ENCODE measurements at regions of chr5 and their contacts with region 1.

Region 1: DNA sequence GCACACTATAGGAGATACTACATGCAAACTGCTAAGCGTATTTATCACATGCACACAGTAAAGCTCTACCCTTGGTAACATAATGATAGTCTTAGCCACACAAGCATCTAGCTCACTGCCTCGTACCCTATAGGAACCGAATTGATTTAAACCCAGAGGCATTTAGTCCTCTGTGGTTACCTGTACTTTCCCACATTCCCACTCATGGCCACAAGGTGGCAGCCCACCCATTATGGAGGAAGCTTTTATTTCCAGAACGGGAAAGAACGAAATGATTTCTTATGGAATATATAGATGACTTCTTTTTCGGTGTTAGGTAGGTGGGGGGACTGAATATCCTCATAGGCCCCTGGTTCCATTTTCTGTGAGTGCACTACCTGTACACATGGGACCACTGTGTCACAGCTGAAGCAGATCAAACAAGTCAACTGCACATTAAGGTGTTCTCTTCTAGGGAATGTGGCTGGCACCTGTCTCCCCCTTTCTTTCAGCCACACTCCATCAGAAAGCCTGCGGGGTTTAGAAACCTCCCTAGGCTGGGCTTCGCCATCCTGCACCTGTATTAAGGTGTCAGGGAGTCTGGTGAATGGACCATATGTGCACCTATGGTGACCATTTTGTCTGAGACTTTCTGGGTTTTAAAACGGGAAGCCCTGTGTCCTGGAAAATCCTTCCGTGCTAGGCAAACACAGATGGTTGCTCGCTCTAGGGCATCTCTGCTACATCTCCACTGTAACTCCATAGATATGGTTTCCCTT is 313.2 kb downstream of the SLIT3 start:
- DNase-seq: peak; percentile 89
- H3K4me3 ChIP-seq: no peak overlapping the region
- H3K27ac ChIP-seq: no peak overlapping the region
- H3K4me1 ChIP-seq: no peaks in the 10 kb centered on the region
- H3K27me3 ChIP-seq: no peaks in the 10 kb centered on the region
- CTCF ChIP-seq: peak; percentile 87 to 92 (median 92)
- POLR2A ChIP-seq: no peak

Region 2: DNA sequence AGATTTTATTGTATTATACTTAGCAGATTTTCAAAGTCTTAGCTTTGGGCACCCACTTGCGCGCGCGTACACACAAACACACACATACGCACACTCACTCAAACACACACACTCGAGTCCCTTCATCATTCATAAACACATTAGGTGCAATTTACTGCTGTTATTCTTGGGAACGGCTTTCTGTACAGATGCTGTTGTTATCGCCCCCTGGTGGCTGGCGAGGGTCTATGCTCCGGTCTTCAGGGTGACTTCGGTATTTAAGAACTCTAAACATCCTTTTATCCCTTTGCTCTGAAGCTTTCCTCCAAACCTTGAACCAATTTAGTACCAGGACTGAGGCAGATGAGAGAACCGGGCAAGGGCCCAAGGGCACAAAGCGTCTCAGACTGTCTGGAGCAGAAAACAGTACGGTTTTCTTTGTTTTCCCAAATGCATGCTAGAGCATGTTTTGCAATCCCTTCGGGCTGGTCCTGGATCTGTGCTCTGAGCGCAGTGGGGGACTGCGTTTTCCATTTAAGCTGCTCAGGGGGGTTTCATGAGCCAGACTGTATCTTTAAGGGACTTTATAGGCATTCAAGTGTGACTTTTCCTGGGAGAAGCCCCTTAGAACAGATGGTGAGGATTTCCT is 314.9 kb after region 1 on chr5:
- intact Hi-C with region 1: loop called (anchors 10 kb)
- DNase-seq: peak; percentile 85
- H3K4me3 ChIP-seq: no peak overlapping the region
- H3K27ac ChIP-seq: no peak overlapping the region
- H3K4me1 ChIP-seq: no peaks in the 10 kb centered on the region
- H3K27me3 ChIP-seq: no peaks in the 10 kb centered on the region
- CTCF ChIP-seq: peak; percentile 81 to 98 (median 83)
- POLR2A ChIP-seq: no peak

Measured in testis (tissue), 5 donors.